Vagina (tissue), 2 donors: ENCODE measurements at regions of chr12 and their contacts with region 1.

Region 1: DNA sequence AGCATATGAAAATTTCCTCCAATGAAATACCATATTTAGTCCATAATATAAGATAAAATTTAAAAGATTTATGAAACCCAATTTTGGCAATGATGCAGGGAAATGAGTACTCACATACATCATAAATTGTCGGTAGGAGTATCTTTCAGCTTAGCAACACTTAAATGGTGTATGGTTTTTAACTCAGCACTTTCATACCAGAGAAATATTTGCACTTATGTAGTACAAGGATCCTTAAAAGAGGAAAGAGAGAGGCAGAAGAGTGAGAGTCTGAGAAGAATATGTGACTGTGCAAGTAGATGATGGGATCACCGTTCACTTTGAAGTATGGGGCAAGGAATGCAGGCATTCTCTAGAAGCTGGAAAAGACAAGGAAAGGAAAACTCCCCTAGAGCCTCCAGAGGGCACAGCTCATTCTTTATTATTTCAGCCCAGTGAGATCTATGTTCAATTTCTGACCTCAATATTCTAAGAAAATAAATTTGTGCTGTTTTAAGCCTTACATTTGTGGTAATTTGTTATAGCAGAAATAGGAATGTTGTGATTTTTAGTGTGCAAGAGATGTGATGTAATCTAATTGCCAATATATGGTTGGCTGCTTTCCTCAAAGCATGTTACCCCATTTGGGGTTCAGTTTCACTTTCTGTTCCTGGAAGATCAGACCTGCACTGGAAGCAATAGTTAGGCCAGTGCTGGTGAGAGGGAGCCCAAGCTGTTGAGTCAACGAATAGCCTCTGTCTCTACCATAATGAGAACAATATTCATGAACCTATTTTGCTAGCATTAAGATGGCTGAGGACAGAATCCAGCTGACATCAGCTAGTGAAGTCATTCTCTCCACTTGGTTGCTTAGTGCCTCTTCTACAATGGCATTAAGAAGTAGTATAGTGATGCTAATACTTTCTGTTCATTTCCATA is 379.6 kb upstream of the DCN start:
- DNase-seq: no peak
- H3K4me3 ChIP-seq: no peak overlapping the region
- H3K27ac ChIP-seq: no peak overlapping the region
- H3K4me1 ChIP-seq: peaks cover 8% of the 10 kb centered on the region
- H3K27me3 ChIP-seq: no peaks in the 10 kb centered on the region
- CTCF ChIP-seq: no peak
- POLR2A ChIP-seq: no peak

Region 2: DNA sequence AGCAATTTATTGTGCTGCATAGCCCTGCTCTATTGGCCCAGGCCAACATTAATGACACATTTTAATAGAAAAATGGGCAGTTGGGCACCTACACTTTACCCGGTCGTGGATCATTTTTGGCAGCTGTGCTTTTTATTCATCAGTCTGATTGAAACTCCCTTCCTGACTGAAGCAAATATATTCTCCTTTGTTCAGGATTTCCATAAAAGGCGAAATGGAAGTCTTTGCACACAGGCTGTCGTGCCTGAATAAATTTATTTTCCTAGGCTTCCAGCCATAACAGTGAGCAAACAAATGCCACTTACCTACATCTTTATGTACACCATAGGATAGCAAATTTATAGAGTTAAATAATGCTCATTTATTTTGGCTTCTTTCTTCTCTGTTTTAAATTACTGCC is 101.1 kb after region 1 on chr12:
- intact Hi-C with region 1: no loop called
- DNase-seq: no peak
- H3K4me3 ChIP-seq: no peak overlapping the region
- H3K27ac ChIP-seq: no peak overlapping the region
- H3K4me1 ChIP-seq: peaks cover 7% of the 10 kb centered on the region
- H3K27me3 ChIP-seq: no peaks in the 10 kb centered on the region
- CTCF ChIP-seq: no peak
- POLR2A ChIP-seq: no peak

Region 3: GRCh38 chr12:91991399-91992187 is 429.4 kb after region 1 on chr12:
- intact Hi-C with region 1: loop called (anchors 5 kb)
- DNase-seq: no peak
- H3K4me3 ChIP-seq: no peak overlapping the region
- H3K27ac ChIP-seq: no peak overlapping the region
- H3K4me1 ChIP-seq: no peaks in the 10 kb centered on the region
- H3K27me3 ChIP-seq: no peaks in the 10 kb centered on the region
- CTCF ChIP-seq: no peak
- POLR2A ChIP-seq: no peak